PC-3 (cell line): ENCODE measurements at regions of chr1 and their contacts with region 1.

Region 1: DNA sequence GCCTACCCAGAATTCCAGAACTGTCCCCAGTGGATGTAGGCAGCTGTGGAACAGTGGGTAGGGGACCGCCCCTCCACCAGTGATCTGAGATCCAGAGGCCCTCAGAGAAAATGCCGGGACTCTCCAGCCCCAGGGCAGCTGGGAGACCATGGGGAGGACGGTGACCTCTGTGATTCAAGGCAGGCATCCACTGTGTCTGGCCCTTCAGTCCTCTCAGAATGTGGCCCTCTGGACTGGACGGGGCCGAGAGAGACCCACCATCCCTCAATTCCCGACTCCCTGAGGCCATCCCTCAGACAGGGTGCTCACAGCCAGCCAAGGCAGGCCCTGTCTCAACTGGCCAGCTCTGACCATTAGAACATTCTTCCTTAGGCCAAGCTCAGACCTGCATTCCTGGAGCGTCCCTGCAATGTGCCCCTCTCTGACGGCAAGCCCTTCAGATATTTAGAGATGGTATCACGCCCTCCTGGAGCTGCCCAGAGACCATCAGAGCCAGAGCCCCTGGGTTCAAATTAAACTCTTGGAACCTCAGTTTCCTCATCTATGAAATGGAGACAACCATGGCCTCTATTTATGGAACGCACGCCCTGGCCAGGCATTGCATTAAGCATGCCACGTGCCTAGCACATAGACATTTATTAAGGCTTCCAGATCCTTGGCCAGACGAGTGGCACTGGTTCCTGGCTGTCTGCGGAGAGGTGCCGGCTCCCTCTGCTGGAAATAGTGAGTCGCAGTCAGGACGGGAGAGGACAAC is 9.6 kb upstream of the EPS8L3 start:
- DNase-seq: peak; percentile 88
- ATAC-seq: peak; percentile 88
- H3K4me3 ChIP-seq: no peak overlapping the region
- H3K27ac ChIP-seq: no peak overlapping the region
- H3K4me1 ChIP-seq: peaks cover 14% of the 10 kb centered on the region; the same call in 1 of the 2 replicates
- H3K27me3 ChIP-seq: no peaks in the 10 kb centered on the region
- CTCF ChIP-seq: peak; percentile 97

Region 2: GRCh38 chr1:109548321-109549267 is 224.7 kb before region 1 on chr1 and contains the start of gene GNAI3:
- CTCF ChIA-PET with region 1: interaction called, 3 read pairs
- POLR2A ChIA-PET with region 1: no interaction called
- intact Hi-C with region 1: loop called (anchors 1 kb)
- DNase-seq: peak; percentile 97
- ATAC-seq: peak; percentile 92
- H3K4me3 ChIP-seq: peak within 1 kb of the TSS; percentile 93
- H3K27ac ChIP-seq: peak within 1 kb of the TSS; percentile 62
- H3K4me1 ChIP-seq: peaks cover 26% of the 10 kb centered on the region
- H3K27me3 ChIP-seq: no peaks in the 10 kb centered on the region
- CTCF ChIP-seq: no peak
- total RNA-seq, gene GNAI3: 6.7 and 6.8 TPM in 2 replicates

Region 3: GRCh38 chr1:109637446-109637845 is 135.9 kb before region 1 on chr1:
- CTCF ChIA-PET with region 1: interaction called, 12 read pairs
- POLR2A ChIA-PET with region 1: no interaction called
- intact Hi-C with region 1: no loop called
- DNase-seq: no peak
- ATAC-seq: no peak
- H3K4me3 ChIP-seq: no peak overlapping the region
- H3K27ac ChIP-seq: no peak overlapping the region
- H3K4me1 ChIP-seq: no peaks in the 10 kb centered on the region
- H3K27me3 ChIP-seq: no peaks in the 10 kb centered on the region
- CTCF ChIP-seq: no peak

Region 4: DNA sequence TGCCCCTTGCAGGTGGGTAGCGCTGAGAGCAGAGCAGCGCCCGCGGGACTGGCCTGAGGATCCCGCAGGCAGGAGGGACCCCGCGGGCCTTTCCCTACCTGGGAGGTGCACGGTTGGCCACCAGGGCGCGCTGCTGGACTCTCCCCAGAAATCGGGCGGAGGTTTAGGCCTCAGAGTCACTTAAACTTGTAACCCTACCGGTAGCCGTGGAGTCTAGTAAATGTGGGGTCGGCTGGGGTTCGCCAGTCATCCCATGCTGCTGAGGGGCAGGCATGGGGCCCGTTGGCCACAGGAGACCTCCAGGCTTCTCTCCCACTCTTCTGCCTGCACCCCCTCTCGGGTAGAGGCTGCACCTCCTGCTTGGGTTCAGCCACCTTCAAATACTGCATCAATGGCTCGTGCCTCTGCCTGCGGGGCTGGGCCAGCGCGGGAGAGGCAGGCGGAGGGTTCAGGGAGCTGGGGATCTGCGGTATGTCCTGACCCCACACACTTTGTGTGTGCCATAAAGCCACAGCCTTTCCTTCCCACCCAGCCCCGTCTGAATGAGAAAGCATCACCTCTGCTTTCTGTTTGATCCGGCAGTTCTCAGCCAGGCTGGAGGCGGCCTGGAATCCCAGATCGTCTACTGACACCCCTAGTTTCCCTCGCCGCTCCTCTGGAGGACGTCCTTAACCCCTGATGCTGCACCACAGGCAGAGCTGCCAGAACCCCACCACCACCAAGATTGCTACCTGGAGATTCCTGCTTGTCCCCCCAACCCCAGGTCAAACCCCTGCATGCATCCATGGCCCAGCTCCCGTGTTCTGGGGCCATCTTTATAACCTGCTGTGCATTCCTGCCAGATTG is 129.7 kb before region 1 on chr1:
- CTCF ChIA-PET with region 1: interaction called, 12 read pairs
- POLR2A ChIA-PET with region 1: no interaction called
- intact Hi-C with region 1: loop called (anchors 1 kb)
- DNase-seq: peak; percentile 86
- ATAC-seq: peak; percentile 97
- H3K4me3 ChIP-seq: peak overlapping the region; percentile 55; the same call in 1 of the 2 replicates
- H3K27ac ChIP-seq: no peak overlapping the region
- H3K4me1 ChIP-seq: peaks cover 5% of the 10 kb centered on the region; the same call in 1 of the 2 replicates
- H3K27me3 ChIP-seq: no peaks in the 10 kb centered on the region
- CTCF ChIP-seq: peak; percentile 92

Region 5: DNA sequence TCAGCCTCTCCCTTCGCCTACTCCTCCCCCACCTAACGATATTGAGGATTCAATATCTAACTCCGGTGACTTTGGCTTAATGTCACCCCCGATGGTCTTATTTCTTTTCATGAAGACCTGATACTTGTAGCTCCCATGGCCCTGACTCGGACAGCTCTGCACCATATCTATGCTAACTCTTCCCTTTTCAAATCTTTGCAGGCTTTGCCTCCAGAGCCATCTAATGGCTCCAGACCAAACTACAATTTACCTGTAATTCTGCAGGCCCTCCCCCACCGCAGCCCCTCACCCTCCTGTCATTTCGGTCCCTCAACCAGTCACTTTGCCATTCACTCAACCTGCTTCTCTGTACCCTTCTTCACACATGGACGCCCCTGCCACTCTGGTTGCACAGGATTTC is 69.2 kb before region 1 on chr1:
- CTCF ChIA-PET with region 1: no interaction called
- POLR2A ChIA-PET with region 1: no interaction called
- intact Hi-C with region 1: no loop called
- DNase-seq: no peak
- ATAC-seq: no peak
- H3K4me3 ChIP-seq: no peak overlapping the region
- H3K27ac ChIP-seq: no peak overlapping the region
- H3K4me1 ChIP-seq: peaks cover 6% of the 10 kb centered on the region; the same call in 1 of the 2 replicates
- H3K27me3 ChIP-seq: no peaks in the 10 kb centered on the region
- CTCF ChIP-seq: no peak; the same call in 1 of the 2 replicates

Region 6: GRCh38 chr1:109718491-109718890 is 54.8 kb before region 1 on chr1:
- CTCF ChIA-PET with region 1: no interaction called
- POLR2A ChIA-PET with region 1: no interaction called
- intact Hi-C with region 1: loop called (anchors 1 kb)
- DNase-seq: peak; percentile 24
- ATAC-seq: peak; percentile 55; the same call in 1 of the 2 replicates
- H3K4me3 ChIP-seq: no peak overlapping the region
- H3K27ac ChIP-seq: peak overlapping the region; percentile 38; the same call in 1 of the 2 replicates
- H3K4me1 ChIP-seq: peaks cover 9% of the 10 kb centered on the region
- H3K27me3 ChIP-seq: no peaks in the 10 kb centered on the region
- CTCF ChIP-seq: peak; percentile 28; the same call in 1 of the 2 replicates

Region 7: DNA sequence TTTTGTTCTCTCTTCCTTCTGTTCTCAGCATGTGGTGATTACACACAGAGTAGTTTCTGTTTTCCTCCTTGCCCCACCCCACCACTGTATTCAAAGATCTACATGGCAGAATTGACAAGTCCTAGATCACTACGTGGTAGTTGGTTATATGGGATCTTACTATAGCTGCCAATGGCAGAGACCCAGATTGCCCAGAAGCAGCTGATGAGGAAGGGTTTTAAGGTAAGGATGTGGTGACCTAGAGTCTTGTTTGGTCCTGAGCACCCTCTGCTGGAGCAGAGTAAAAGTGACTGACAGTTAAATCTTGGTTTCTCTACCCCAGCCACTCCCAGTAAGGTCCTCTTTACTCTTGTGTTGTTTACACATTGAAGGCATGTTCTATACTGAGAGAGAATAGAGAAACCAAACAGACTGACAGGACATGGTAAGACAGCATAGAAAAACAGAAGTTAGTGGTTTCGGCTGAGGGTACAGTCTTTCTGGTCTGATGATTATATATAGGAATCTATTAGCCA is 238.3 kb after region 1 on chr1:
- CTCF ChIA-PET with region 1: interaction called, 3 read pairs
- POLR2A ChIA-PET with region 1: no interaction called
- intact Hi-C with region 1: loop called (anchors 1 kb)
- DNase-seq: peak; percentile 71
- ATAC-seq: peak; percentile 99
- H3K4me3 ChIP-seq: no peak overlapping the region
- H3K27ac ChIP-seq: no peak overlapping the region
- H3K4me1 ChIP-seq: no peaks in the 10 kb centered on the region
- H3K27me3 ChIP-seq: no peaks in the 10 kb centered on the region
- CTCF ChIP-seq: peak; percentile 78